ENCODE measurements at regions of chr17 and their contacts with region 1.

Region 1: DNA sequence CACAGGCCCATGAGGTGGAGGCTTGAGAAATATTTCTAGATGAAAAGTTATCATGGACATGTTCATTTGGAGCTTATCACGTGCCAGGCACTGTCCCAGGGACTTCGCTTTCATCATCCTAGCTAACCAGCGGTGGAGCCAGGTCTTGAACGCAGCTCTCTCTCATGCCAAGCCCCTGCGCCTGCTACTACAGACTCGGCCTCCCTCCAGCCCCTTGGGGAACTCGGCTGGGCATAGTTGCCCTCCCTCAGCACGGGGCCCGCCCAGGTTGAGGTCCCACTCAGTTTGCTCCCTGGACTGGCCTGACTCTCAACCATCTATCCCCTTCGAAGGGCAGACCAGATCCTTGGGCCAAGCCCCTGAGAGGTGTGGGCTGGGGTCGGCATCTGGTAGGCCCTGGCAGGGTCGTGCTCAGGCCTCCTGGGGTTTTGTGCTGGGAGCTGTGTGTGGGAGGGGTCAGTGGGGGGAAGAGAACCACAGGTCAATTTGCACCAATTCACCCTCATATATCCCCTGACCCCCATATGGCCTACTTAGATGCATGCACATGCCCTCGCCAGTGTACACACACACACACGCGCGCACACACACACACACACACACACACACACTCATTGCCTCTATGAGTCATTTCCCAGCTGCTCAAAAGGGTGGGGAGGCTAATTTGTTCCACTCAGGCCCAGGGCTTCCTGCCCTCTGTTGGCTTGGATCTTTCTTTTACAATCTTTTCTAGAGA is 12.1 kb upstream of the SCN4A start:
- DNase-seq: peak; percentile 82
- H3K4me3 Mint-ChIP-seq: peak overlapping the region; percentile 20
- H3K27ac Mint-ChIP-seq: peak overlapping the region; percentile 80
- H3K4me1 Mint-ChIP-seq: peaks cover 18% of the 10 kb centered on the region
- H3K27me3 Mint-ChIP-seq: no peaks in the 10 kb centered on the region

Region 2: GRCh38 chr17:63600569-63601438 is 384.0 kb before region 1 on chr17 and contains the start of gene TACO1:
- CTCF ChIA-PET with region 1: no interaction called
- POLR2A ChIA-PET with region 1: no interaction called
- intact Hi-C with region 1: no loop called
- DNase-seq: peak; percentile 88
- H3K4me3 Mint-ChIP-seq: peak within 1 kb of the TSS; percentile 86
- H3K27ac Mint-ChIP-seq: peak within 1 kb of the TSS; percentile 86
- H3K4me1 Mint-ChIP-seq: peaks cover 39% of the 10 kb centered on the region
- H3K27me3 Mint-ChIP-seq: no peaks in the 10 kb centered on the region
- total RNA-seq, gene TACO1: 28.2 to 30.4 TPM

Region 3: DNA sequence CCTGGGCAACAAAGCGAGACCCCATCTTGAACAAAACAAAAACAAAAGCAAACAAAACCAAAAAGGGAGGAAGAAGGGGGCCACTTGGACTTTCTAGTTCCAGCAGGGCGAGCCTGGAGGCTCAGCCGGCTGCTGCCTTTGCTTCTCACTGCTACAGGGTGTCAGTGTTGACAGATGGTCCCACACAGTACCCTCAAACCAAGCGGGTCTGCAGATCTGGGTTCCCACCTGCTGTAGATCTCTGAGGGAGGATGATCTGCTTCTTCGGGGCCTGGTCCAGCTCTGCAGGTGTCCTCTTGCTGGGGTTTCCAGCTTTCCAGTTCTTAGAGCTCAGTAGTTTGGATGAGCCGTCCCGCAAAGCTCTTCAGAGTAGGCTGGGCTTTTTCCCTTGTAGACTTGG is 80.5 kb before region 1 on chr17:
- CTCF ChIA-PET with region 1: interaction called, 18 read pairs
- POLR2A ChIA-PET with region 1: no interaction called
- intact Hi-C with region 1: no loop called
- DNase-seq: no peak
- H3K4me3 Mint-ChIP-seq: no peak overlapping the region
- H3K27ac Mint-ChIP-seq: no peak overlapping the region
- H3K4me1 Mint-ChIP-seq: peaks cover 11% of the 10 kb centered on the region
- H3K27me3 Mint-ChIP-seq: no peaks in the 10 kb centered on the region

Region 4: GRCh38 chr17:63911657-63912426 is 73.0 kb before region 1 on chr17:
- CTCF ChIA-PET with region 1: interaction called, 18 read pairs
- POLR2A ChIA-PET with region 1: no interaction called
- intact Hi-C with region 1: no loop called
- DNase-seq: peak; percentile 77
- H3K4me3 Mint-ChIP-seq: no peak overlapping the region
- H3K27ac Mint-ChIP-seq: no peak overlapping the region
- H3K4me1 Mint-ChIP-seq: no peaks in the 10 kb centered on the region
- H3K27me3 Mint-ChIP-seq: no peaks in the 10 kb centered on the region

Region 5: DNA sequence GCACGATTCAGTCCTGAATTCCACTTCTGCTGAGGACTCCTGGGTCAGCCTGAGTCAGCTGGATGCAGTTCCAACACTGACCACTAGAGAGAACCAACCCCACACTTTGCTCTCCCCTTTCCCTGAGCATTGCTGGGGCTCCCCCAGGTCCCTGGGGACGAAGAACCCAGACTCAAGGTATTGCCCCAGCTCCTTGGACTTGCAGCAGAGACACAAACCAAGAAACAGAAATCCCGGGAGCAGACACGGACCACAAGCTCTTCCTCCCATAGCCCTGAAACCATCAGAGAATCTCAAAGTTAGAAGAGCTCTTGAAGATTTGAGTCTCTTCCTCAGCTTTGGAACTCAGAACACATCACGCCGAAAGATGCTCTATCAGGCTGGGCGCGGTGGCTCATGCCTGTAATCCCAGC is 65.5 kb before region 1 on chr17:
- CTCF ChIA-PET with region 1: interaction called, 25 read pairs
- POLR2A ChIA-PET with region 1: no interaction called
- intact Hi-C with region 1: loop called (anchors 1 kb)
- DNase-seq: peak; percentile 84
- H3K4me3 Mint-ChIP-seq: peak overlapping the region; percentile 27
- H3K27ac Mint-ChIP-seq: peak overlapping the region; percentile 44
- H3K4me1 Mint-ChIP-seq: peaks cover 6% of the 10 kb centered on the region
- H3K27me3 Mint-ChIP-seq: no peaks in the 10 kb centered on the region

Region 6: DNA sequence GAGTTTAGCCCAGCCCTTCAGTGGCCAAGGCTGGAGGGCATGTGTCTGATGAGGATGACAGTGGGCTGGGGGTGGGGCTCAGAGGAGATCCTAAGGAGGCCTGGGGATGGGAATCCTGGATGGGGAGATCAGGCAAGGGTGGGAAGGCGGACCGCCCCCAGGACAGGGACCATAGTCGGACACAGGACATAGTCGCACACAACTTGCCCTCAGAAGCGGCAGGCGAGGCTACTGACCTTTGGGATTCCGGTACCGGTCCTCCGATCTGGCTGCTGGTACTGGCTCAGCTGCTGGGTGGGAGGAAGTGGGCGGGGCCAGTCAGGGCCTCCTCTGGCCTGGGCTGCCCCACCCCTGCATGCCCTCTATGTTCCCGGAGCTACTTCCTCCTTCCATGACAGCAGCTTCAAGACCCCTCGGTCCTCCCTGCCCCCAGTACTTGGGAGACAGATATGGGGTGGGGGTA is 53.7 kb before region 1 on chr17:
- CTCF ChIA-PET with region 1: interaction called, 8 read pairs
- POLR2A ChIA-PET with region 1: no interaction called
- intact Hi-C with region 1: loop called (anchors 5 kb)
- DNase-seq: peak; percentile 77
- H3K4me3 Mint-ChIP-seq: peak overlapping the region; percentile 95
- H3K27ac Mint-ChIP-seq: peak overlapping the region; percentile 91
- H3K4me1 Mint-ChIP-seq: peaks cover 17% of the 10 kb centered on the region
- H3K27me3 Mint-ChIP-seq: no peaks in the 10 kb centered on the region

Region 7: DNA sequence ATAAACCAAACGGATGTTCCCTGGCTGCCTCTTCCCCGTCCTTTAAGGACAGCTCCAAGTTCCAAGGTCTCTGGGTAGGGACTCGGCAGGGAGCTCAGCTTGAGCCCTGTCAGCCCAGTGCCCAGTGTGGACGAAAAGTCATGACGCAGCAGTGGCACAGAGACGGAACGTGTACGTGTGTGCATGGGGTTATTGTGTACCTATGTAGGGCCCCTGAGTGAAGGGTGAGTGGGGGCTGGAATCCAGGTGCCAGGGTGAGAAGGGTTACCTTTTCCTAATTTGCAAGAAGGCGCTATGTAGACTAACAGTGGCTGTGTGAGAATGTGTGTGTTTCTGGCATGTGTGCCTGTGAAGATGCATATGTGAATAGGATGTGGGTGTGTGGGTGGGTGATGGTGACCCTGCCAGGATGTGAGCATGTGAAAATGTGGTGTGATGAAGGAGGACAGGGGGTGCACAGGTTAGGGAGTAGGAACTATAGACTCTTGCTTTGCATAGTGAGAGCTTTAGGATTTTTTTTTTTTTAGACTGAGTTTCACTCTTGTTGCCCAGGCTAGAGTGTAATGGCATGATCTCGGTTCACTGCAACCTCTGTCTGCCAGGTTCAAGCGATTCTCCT is 18.1 kb before region 1 on chr17:
- CTCF ChIA-PET with region 1: no interaction called
- POLR2A ChIA-PET with region 1: no interaction called
- intact Hi-C with region 1: loop called (anchors 1 kb)
- DNase-seq: peak; percentile 70
- H3K4me3 Mint-ChIP-seq: no peak overlapping the region
- H3K27ac Mint-ChIP-seq: peak overlapping the region; percentile 5
- H3K4me1 Mint-ChIP-seq: peaks cover 15% of the 10 kb centered on the region
- H3K27me3 Mint-ChIP-seq: no peaks in the 10 kb centered on the region

Region 8: DNA sequence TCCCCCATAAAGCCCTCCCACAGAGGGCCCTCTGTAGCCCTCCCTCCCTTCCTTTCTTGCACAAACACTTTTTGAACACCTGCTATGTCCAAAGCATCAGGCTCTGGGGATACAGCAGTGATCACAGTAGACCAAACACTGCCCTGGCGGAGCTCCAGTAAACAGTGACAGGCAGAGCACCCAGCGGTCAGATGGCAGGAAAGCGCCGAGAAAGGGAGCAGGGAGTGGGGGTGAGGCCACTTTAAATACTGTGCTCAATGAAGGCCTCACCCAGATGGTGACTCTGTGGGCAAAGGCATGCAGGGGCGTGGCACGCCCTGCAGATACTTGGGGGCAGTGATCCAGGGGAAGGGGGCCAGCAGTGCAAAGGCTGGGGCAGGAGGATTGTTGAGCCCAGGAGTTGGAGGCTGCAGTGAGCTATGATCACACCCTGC is 20.9 kb after region 1 on chr17:
- CTCF ChIA-PET with region 1: interaction called, 16 read pairs
- POLR2A ChIA-PET with region 1: interaction called, 3 read pairs
- intact Hi-C with region 1: no loop called
- DNase-seq: no peak
- H3K4me3 Mint-ChIP-seq: no peak overlapping the region
- H3K27ac Mint-ChIP-seq: peak overlapping the region; percentile 16
- H3K4me1 Mint-ChIP-seq: peaks cover 40% of the 10 kb centered on the region
- H3K27me3 Mint-ChIP-seq: no peaks in the 10 kb centered on the region